ENCODE measurements at regions of chr2 and their contacts with region 1.

Region 1: GRCh38 chr2:231900972-231901371 is 25.2 kb downstream of the NPPC start:
- DNase-seq: no peak
- H3K4me3 ChIP-seq: no peak overlapping the region
- H3K4me3 Mint-ChIP-seq: no peak overlapping the region
- H3K27ac Mint-ChIP-seq: no peak overlapping the region
- H3K4me1 ChIP-seq: no peaks in the 10 kb centered on the region
- H3K4me1 Mint-ChIP-seq: no peaks in the 10 kb centered on the region
- H3K27me3 ChIP-seq: no peaks in the 10 kb centered on the region
- H3K27me3 Mint-ChIP-seq: no peaks in the 10 kb centered on the region
- CTCF ChIP-seq: no peak

Region 2: DNA sequence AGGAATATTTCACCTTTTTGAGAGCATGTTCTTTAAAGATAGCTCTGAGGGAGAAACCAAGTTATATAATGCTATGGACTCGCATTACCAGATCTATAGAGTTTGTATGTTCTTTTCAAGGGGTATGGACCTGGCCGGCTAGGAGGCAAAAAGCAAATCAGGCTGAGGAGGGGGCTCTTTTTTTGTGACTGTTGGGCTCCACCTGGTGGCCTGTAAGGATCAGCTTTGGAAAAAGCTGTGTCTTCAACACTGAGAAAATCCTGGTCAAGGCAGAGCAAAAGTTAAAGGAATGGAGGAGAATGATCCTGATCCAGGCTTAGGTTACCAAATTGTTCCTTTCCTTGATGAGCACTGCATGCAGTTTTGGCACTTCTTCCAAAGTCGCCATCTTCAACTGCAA is 241.1 kb after region 1 on chr2:
- CTCF ChIA-PET with region 1: interaction called, 3 read pairs
- POLR2A ChIA-PET with region 1: no interaction called
- intact Hi-C with region 1: loop called (anchors 1 kb)
- DNase-seq: peak; percentile 27 to 36
- H3K4me3 ChIP-seq: no peak overlapping the region
- H3K4me3 Mint-ChIP-seq: no peak overlapping the region
- H3K27ac Mint-ChIP-seq: no peak overlapping the region
- H3K4me1 ChIP-seq: no peaks in the 10 kb centered on the region
- H3K4me1 Mint-ChIP-seq: no peaks in the 10 kb centered on the region
- H3K27me3 ChIP-seq: no peaks in the 10 kb centered on the region
- H3K27me3 Mint-ChIP-seq: no peaks in the 10 kb centered on the region
- CTCF ChIP-seq: peak in 1 of 2 experiments; percentile 65

Region 3: DNA sequence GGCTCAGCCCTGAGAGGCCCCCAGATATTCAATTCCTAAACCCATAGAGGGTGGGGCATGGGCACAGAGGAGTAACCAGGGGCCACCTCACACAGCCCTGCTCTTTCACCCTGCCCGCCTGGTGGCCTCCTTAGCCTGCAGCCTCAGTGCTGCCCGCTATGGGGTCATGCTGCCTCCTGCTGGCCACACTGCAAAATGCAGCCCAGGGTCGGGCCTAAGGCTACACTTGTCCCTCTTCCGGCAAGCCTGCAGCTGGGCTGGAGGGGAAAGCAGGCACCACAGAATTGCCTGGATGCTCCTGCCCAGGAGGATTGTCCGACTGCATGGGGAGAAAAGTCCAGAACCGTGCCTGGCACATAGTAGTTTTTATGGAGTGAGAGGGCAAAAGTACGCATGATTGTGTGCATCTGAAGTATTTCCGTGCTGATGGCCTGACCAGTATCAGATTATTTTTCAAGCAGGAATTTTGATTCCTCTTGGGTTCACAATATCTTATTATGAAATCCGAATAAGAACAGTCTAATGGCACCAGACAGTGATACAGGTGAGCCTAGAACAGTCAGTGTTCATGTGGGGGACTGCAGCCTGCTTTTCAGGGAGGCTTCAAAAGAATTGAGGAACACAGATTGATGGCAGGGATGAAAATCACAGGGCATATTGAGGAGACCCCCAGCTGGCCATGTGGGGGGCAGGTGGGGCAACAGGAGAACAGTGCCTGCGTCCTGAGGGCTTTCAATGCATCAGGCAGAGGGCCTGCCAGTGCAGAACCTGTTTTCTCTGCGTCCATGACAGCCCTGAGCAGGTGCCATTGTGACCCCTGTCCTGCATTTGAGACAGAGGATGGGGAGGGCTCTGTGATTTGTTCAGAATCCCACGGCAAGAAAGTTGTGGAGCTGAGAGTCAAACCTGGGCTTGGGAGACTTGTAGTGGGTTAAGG is 426.4 kb after region 1 on chr2:
- CTCF ChIA-PET with region 1: no interaction called
- POLR2A ChIA-PET with region 1: no interaction called
- intact Hi-C with region 1: loop called (anchors 1 kb)
- DNase-seq: peak; percentile 56 to 79
- H3K4me3 ChIP-seq: no peak overlapping the region
- H3K4me3 Mint-ChIP-seq: no peak overlapping the region
- H3K27ac Mint-ChIP-seq: no peak overlapping the region
- H3K4me1 ChIP-seq: peaks cover 7% of the 10 kb centered on the region
- H3K4me1 Mint-ChIP-seq: no peaks in the 10 kb centered on the region
- H3K27me3 ChIP-seq: no peaks in the 10 kb centered on the region
- H3K27me3 Mint-ChIP-seq: no peaks in the 10 kb centered on the region
- CTCF ChIP-seq: peak; percentile 59 to 68

Region 4: GRCh38 chr2:232365621-232366321 is 464.8 kb after region 1 on chr2:
- CTCF ChIA-PET with region 1: no interaction called
- POLR2A ChIA-PET with region 1: no interaction called
- intact Hi-C with region 1: loop called (anchors 5 kb)
- DNase-seq: peak; percentile 64 to 66
- H3K4me3 ChIP-seq: no peak overlapping the region
- H3K4me3 Mint-ChIP-seq: no peak overlapping the region
- H3K27ac Mint-ChIP-seq: no peak overlapping the region
- H3K4me1 ChIP-seq: 0 out of 2 replicates have a peak, but pooled peaks cover 4% of the 10 kb centered on the region
- H3K4me1 Mint-ChIP-seq: no peaks in the 10 kb centered on the region
- H3K27me3 ChIP-seq: no peaks in the 10 kb centered on the region
- H3K27me3 Mint-ChIP-seq: no peaks in the 10 kb centered on the region
- CTCF ChIP-seq: peak; percentile 40 to 48

Region 5: GRCh38 chr2:232438951-232439757 is 538.2 kb after region 1 on chr2:
- CTCF ChIA-PET with region 1: no interaction called
- POLR2A ChIA-PET with region 1: no interaction called
- intact Hi-C with region 1: loop called (anchors 1 kb)
- DNase-seq: peak; percentile 48 to 63
- H3K4me3 ChIP-seq: no peak overlapping the region
- H3K4me3 Mint-ChIP-seq: no peak overlapping the region
- H3K27ac Mint-ChIP-seq: no peak overlapping the region
- H3K4me1 ChIP-seq: 0 out of 2 replicates have a peak, but pooled peaks cover 3% of the 10 kb centered on the region
- H3K4me1 Mint-ChIP-seq: no peaks in the 10 kb centered on the region
- H3K27me3 ChIP-seq: no peaks in the 10 kb centered on the region
- H3K27me3 Mint-ChIP-seq: no peaks in the 10 kb centered on the region
- CTCF ChIP-seq: peak; percentile 1 to 26

Measured in Caco-2 (cell line).